ENCODE measurements at regions of chr13 and their contacts with region 1.

Region 1: GRCh38 chr13:41310963-41311606 is at the start of gene NAA16:
- DNase-seq: peak; percentile 98
- H3K4me3 Mint-ChIP-seq: peak within 1 kb of the TSS; percentile 94
- H3K27ac Mint-ChIP-seq: peak within 1 kb of the TSS; percentile 93
- H3K4me1 Mint-ChIP-seq: peaks cover 37% of the 10 kb centered on the region
- H3K27me3 Mint-ChIP-seq: no peaks in the 10 kb centered on the region
- total RNA-seq, gene NAA16: 30.3 and 31.2 TPM in 2 replicates

Region 2: GRCh38 chr13:41263261-41264027 is 47.6 kb before region 1 on chr13 and contains the start of gene MTRF1:
- intact Hi-C with region 1: loop called (anchors 1 kb)
- DNase-seq: peak; percentile 94
- H3K4me3 Mint-ChIP-seq: peak within 1 kb of the TSS; percentile 98
- H3K27ac Mint-ChIP-seq: peak within 1 kb of the TSS; percentile 100
- H3K4me1 Mint-ChIP-seq: peaks cover 8% of the 10 kb centered on the region
- H3K27me3 Mint-ChIP-seq: no peaks in the 10 kb centered on the region
- total RNA-seq, gene MTRF1: 20.1 and 20.6 TPM in 2 replicates

Region 3: DNA sequence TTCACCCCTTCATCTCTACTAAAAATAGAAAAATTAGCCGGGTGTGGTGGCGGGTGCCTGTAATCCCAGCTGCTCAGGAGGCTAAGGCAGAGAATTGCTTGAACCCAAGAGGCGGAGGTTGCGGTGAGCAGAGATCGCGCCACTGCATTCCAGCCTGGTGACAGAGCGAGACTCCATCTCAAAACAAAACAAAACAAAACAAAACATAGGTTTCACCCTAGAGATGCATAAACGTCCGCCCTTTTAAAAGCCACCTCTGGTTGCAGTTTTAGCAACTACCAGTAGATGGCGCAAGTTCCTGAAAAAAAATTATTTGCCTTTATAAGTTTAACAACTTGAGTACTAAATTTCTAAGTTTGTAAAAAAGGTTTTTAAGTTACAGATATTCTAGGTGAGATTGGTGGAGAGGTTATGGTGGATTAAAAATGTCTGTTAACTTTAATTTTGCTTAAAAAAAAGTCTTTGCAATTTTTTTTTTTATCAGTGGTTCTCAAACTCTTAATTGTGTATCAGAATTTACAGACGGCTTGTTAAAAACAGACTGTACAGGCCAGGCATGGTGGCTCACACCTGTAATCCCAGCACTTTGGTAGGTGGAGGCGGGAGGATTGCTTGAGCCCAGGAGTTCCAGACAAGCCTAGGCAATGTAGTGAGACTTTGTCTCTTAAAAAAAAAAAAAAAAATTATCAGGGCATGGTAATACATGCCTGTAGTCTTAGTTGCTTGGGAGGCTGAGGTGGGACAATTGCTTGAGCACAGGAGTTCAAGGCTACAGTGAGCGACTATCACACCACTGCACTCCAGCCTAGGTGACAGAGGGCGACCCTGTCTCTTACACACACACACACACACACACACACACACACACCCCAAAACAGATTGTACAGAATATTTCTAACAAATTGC is 42.1 kb after region 1 on chr13:
- intact Hi-C with region 1: loop called (anchors 5 kb)
- DNase-seq: peak; percentile 89
- H3K4me3 Mint-ChIP-seq: no peak overlapping the region
- H3K27ac Mint-ChIP-seq: peak overlapping the region; percentile 81
- H3K4me1 Mint-ChIP-seq: peaks cover 34% of the 10 kb centered on the region
- H3K27me3 Mint-ChIP-seq: no peaks in the 10 kb centered on the region

Region 4: GRCh38 chr13:42039946-42040729 is 729.1 kb after region 1 on chr13:
- intact Hi-C with region 1: loop called (anchors 10 kb)
- DNase-seq: peak; percentile 95
- H3K4me3 Mint-ChIP-seq: peak overlapping the region; percentile 84
- H3K27ac Mint-ChIP-seq: peak overlapping the region; percentile 83
- H3K4me1 Mint-ChIP-seq: peaks cover 19% of the 10 kb centered on the region
- H3K27me3 Mint-ChIP-seq: peaks cover 31% of the 10 kb centered on the region

Measured in activated CD4-positive, alpha-beta T cell treated with anti-CD3 and anti-CD28 coated beads, Interleukin-2, amount 10 ng/mL, durations not matched to agents 24 days and 14 days (primary cell).